T-cell (primary cell): ENCODE measurements at regions of chr3 and their contacts with region 1.

Region 1: DNA sequence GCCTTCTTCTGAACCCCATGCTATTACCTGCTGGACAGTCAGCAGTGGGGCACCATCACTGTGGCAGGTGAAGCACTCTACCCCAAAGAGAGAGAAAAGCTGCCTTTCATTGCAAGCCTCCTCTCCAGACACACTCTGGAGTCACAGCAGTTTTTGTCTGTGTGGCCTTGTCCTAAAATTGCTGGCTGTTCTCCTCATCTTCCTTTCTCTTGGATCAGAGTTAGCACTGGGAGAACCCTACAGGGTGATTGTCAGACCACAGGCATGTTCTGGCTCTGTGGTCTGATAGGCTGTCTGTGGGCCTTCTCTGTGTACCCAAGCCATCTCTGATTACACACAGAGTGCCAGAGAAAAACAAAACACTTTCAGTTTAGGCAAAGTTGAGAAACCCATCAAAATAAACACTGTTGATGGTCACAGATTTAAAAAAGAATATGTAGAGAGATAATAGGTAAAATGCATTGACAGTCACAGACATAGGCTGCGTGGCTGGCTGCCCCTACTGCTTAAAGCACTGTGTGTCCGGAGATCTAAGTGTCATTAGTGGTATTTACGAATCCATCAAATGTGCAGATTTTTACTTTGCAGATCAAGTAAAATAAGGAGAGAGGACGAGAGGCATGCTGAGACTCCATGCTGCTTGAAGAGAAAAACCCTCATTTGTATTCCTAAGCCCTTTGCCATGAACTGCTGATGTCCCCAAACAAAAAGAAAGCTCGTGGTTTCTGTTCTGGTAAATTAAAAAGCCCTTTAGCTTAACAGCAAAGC is 689.9 kb downstream of the TUSC7 start:
- DNase-seq: no peak
- ATAC-seq: no peak
- H3K4me3 ChIP-seq: no peak overlapping the region
- H3K4me3 Mint-ChIP-seq: no peak overlapping the region
- H3K27ac ChIP-seq: no peak overlapping the region
- H3K27ac Mint-ChIP-seq: no peak overlapping the region
- H3K4me1 ChIP-seq: no peaks in the 10 kb centered on the region
- H3K4me1 Mint-ChIP-seq: no peaks in the 10 kb centered on the region
- H3K27me3 ChIP-seq: no peaks in the 10 kb centered on the region
- H3K27me3 Mint-ChIP-seq: no peaks in the 10 kb centered on the region

Region 2: DNA sequence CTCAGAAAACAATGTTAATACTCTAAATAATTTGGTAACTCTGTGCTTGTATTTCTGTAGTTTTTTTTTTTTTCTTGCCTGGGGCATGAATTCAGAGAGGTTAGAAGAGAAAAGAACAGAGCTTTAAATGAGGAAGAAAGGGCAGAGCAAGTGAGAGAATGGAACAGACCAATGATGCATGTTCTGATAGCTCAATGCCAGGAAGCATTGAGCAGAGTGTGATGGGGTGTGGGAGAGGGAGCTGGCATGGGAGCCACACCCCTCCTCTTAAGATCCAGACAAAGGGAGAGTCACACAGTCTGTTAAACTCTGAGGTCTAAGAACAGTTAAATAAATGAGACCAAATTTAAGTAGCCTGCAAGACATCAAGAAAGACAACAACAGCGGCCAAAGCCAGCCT is 151.3 kb before region 1 on chr3:
- CTCF ChIA-PET with region 1: no interaction called
- POLR2A ChIA-PET with region 1: no interaction called
- DNase-seq: no peak
- ATAC-seq: no peak
- H3K4me3 ChIP-seq: no peak overlapping the region
- H3K4me3 Mint-ChIP-seq: no peak overlapping the region
- H3K27ac ChIP-seq: no peak overlapping the region
- H3K27ac Mint-ChIP-seq: no peak overlapping the region
- H3K4me1 ChIP-seq: no peaks in the 10 kb centered on the region
- H3K4me1 Mint-ChIP-seq: no peaks in the 10 kb centered on the region
- H3K27me3 ChIP-seq: no peaks in the 10 kb centered on the region
- H3K27me3 Mint-ChIP-seq: no peaks in the 10 kb centered on the region

Region 3: DNA sequence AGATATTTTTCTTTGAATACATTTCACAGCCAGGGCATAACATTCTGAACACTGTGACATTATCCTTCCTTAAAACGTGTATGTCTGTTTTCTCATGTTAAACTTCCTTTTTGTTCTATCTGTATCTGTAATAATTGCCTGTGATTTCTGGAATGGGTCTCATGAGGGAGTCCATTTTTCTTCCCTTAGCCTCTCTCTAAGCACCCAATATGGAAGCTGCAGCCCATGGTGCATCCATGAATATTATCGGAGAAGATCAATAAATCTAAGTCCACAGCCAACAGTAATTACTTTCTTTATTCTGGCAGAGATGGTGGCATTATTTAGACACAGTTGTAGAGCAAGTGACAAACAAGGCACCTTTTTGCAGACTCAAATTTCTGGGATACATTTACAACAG is 18.9 kb before region 1 on chr3:
- CTCF ChIA-PET with region 1: no interaction called
- POLR2A ChIA-PET with region 1: no interaction called
- DNase-seq: no peak
- ATAC-seq: no peak
- H3K4me3 ChIP-seq: no peak overlapping the region
- H3K4me3 Mint-ChIP-seq: no peak overlapping the region
- H3K27ac ChIP-seq: no peak overlapping the region
- H3K27ac Mint-ChIP-seq: no peak overlapping the region
- H3K4me1 ChIP-seq: no peaks in the 10 kb centered on the region
- H3K4me1 Mint-ChIP-seq: no peaks in the 10 kb centered on the region
- H3K27me3 ChIP-seq: no peaks in the 10 kb centered on the region
- H3K27me3 Mint-ChIP-seq: no peaks in the 10 kb centered on the region

Region 4: GRCh38 chr3:117756563-117756962 is 357.1 kb after region 1 on chr3:
- CTCF ChIA-PET with region 1: no interaction called
- POLR2A ChIA-PET with region 1: interaction called in 1 of 2 experiments, 13 read pairs
- DNase-seq: no peak
- ATAC-seq: no peak
- H3K4me3 ChIP-seq: no peak overlapping the region
- H3K4me3 Mint-ChIP-seq: no peak overlapping the region
- H3K27ac ChIP-seq: no peak overlapping the region
- H3K27ac Mint-ChIP-seq: no peak overlapping the region
- H3K4me1 ChIP-seq: no peaks in the 10 kb centered on the region
- H3K4me1 Mint-ChIP-seq: no peaks in the 10 kb centered on the region
- H3K27me3 ChIP-seq: no peaks in the 10 kb centered on the region
- H3K27me3 Mint-ChIP-seq: no peaks in the 10 kb centered on the region